Mammary epithelial cell (primary cell): ENCODE measurements at regions of chr4 and their contacts with region 1.

Region 1: DNA sequence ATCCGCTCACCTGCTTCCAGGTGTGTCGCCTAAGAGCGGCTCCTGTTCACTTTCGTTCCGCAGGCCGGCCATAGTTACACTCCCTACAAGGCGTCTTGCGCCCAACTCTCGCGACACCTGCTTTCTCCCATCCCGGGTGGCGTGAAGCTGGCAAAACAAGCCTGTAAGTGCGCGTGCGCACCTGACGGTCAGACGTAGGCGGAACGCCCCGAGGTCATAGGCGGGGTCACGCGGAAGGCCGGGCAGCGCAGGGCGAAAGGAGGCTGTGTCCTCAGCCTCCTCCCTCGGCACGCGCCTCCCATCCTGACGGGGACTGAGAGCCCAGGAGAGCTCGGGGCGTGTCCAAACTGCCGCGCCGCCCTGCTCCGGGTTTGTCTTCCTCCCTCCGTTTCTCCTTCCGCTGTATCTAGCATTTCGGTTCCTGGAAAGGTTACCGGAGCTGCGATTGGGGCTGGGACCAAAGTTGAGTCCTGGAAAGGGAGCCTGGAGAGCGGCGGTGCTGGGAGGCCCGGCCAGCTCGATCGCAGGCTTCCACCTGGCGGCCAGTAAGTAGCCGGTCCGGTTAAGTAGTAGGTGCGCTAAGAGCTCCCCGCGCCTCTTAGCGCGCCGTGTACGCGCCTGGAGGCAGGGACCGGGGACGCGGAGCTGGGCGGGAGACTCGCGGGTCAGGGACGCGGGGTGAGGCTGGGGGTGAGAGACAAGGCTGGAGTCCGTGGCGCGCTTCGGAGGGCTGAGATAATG is at the starts of genes ABHD18 and MFSD8:
- DNase-seq: peak; percentile 99
- H3K4me3 ChIP-seq: peak within 1 kb of the TSS; percentile 60 to 97 (median 88)
- H3K27ac ChIP-seq: peak within 1 kb of the TSS; percentile 87
- H3K4me1 ChIP-seq: peaks cover 10% of the 10 kb centered on the region
- H3K27me3 ChIP-seq: no peaks in the 10 kb centered on the region
- CTCF ChIP-seq: peak in 1 of 2 donors; percentile 58
- total RNA-seq, gene ABHD18: 6.3 to 7.7 TPM
- total RNA-seq, gene MFSD8: 23.3 to 28.0 TPM

Region 2: GRCh38 chr4:127463883-127464282 is 501.3 kb before region 1 on chr4:
- CTCF ChIA-PET with region 1: no interaction called
- dilution Hi-C with region 1: no loop called
- in situ Hi-C with region 1: no loop called
- intact Hi-C with region 1: no loop called
- DNase-seq: no peak
- H3K4me3 ChIP-seq: no peak overlapping the region
- H3K27ac ChIP-seq: no peak overlapping the region
- H3K4me1 ChIP-seq: no peaks in the 10 kb centered on the region
- H3K27me3 ChIP-seq: no peaks in the 10 kb centered on the region
- CTCF ChIP-seq: no peak

Region 3: GRCh38 chr4:127604949-127605709 is 360.1 kb before region 1 on chr4:
- CTCF ChIA-PET with region 1: no interaction called
- dilution Hi-C with region 1: no loop called
- in situ Hi-C with region 1: no loop called
- intact Hi-C with region 1: loop called (anchors 5 kb)
- DNase-seq: peak; percentile 12
- H3K4me3 ChIP-seq: no peak overlapping the region
- H3K27ac ChIP-seq: no peak overlapping the region
- H3K4me1 ChIP-seq: no peaks in the 10 kb centered on the region
- H3K27me3 ChIP-seq: no peaks in the 10 kb centered on the region
- CTCF ChIP-seq: peak; percentile 28 to 46

Region 4: DNA sequence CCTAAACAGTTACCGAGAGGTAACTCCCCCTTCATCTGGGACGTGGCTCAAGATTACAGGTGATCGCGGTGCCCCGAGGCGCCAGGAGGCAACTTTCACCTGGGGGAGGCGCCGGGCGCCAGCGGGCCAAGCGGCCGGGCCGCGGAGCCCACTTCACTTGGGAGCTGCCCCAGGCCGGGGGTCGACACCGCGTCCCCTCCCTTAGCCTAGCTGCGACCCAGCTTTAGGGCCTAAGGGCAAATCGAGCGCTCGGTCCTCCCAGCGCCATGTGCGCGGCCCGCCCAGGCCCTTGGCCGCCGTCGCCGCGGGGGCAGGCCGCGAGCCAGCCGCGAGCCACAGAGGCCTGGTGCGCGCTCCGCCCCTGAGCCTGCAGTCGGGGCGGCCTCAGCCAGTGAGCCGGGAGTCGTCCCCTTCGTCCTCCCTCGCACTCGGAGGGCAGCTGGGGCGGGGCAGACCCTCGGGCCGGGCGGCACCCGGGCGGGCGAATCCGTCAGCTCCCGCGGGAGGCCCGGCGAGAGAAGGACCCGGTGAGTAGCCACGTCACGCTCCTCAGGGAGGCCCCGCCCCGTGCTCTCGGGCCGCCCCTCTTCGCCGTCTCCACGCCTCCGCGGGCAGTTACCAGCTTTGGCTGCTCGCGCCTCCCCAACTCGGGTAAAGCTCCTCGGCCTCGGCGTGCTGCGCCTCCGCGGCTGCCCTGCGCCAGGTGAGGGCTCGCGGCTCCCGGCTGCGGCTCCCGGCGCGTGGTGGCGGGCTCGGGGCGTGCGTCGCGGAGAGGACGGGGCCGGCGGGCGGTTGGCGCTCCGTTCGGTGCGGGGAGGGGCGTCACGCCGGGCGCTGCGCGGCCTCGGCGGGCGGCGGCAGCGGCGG is 95.7 kb after region 1 on chr4 and contains the start of gene LARP1B:
- CTCF ChIA-PET with region 1: interaction called, 4 read pairs
- dilution Hi-C with region 1: no loop called
- in situ Hi-C with region 1: no loop called
- intact Hi-C with region 1: loop called (anchors 1 kb)
- DNase-seq: peak; percentile 98
- H3K4me3 ChIP-seq: peak within 1 kb of the TSS; percentile 81 to 97 (median 97)
- H3K27ac ChIP-seq: peak within 1 kb of the TSS; percentile 90
- H3K4me1 ChIP-seq: no peaks in the 10 kb centered on the region
- H3K27me3 ChIP-seq: no peaks in the 10 kb centered on the region
- CTCF ChIP-seq: no peak
- total RNA-seq, gene LARP1B: 15.3 to 27.0 TPM